ENCODE measurements at regions of chr3 and their contacts with region 1.

Region 1: GRCh38 chr3:112734718-112735350 is 93.9 kb upstream of the CCDC80 start:
- DNase-seq: peak; percentile 28 to 80 (median 64)
- ATAC-seq: peak; percentile 73
- H3K4me3 ChIP-seq: no peak overlapping the region
- H3K4me3 Mint-ChIP-seq: no peak overlapping the region
- H3K27ac ChIP-seq: no peak overlapping the region
- H3K27ac Mint-ChIP-seq: no peak overlapping the region
- H3K4me1 ChIP-seq: peaks cover 38% of the 10 kb centered on the region
- H3K4me1 Mint-ChIP-seq: peaks cover 39% of the 10 kb centered on the region
- H3K27me3 ChIP-seq: no peaks in the 10 kb centered on the region
- H3K27me3 Mint-ChIP-seq: no peaks in the 10 kb centered on the region
- CTCF ChIP-seq: peak; percentile 70

Region 2: DNA sequence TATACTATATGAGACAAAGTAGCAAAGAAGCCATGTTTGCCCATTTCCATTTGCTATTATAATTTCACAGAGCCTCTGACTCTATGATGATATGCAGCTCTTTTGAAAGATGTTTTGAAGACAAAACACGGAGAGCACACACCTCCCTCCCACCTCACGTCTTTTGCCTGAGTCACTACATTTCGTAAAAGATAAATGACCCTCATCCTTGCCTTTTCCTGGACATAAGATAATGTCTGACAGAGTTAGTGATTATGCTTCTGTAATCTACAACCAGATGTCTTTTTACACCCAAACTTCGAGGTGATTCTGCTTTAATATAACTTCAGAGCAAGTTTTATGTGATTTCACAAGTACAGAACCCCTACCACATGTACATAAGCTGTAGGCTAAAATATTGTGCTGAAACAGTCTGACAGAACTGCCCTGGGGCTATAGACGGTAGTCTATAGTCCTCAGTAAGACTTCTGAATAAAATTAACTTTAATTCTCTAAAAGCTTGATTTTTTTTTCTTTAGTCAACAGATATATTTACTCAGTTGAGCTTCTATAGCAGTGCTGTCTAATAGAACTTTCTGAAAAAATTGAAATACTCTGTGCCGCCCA is 11.9 kb after region 1 on chr3:
- CTCF ChIA-PET with region 1: interaction called, 26 read pairs
- POLR2A ChIA-PET with region 1: interaction called, 3 read pairs
- intact Hi-C with region 1: no loop called
- DNase-seq: no peak
- ATAC-seq: no peak
- H3K4me3 ChIP-seq: no peak overlapping the region
- H3K4me3 Mint-ChIP-seq: no peak overlapping the region
- H3K27ac ChIP-seq: no peak overlapping the region
- H3K27ac Mint-ChIP-seq: no peak overlapping the region
- H3K4me1 ChIP-seq: no peaks in the 10 kb centered on the region
- H3K4me1 Mint-ChIP-seq: peaks cover under 1% of the 10 kb centered on the region
- H3K27me3 ChIP-seq: no peaks in the 10 kb centered on the region
- H3K27me3 Mint-ChIP-seq: no peaks in the 10 kb centered on the region
- CTCF ChIP-seq: no peak

Region 3: DNA sequence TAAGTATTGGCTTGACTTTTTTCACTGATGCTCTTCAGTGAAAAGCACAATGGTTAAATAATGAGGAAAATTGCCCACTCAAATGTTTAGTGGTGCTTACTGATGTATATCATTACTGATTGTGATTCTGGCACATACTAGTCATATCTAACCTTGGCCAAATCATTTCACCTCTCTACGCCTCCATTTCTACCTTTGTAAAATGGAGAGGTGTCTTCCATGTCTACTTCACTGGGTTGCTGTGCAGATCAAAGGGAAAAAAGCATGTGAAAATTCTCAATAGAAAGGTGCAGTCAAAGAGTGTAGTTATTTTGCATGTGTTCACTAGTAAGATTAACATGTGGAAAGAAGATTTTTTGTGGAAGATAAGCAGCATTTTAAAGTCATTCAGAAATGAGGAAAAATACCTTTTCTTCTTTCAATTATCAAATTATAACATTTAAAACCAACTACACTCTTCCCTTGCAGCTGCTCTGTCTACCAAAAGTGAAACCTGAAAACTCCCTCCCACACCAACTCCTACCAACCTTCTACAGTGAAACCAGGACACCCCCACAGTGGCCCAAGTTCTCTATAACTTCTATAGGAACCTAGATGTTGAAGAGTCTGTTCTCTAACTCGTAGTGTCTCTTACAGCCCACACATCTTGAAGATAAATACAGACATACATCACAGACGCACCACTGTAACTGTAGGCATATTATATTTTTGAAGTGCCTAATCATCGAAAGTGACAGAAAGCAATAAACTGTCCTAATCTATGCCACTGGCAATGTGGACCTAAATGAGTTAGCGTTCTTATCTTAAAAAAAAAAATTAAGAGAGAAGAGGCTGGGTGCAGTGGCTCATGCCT is 238.7 kb after region 1 on chr3:
- CTCF ChIA-PET with region 1: interaction called, 141 read pairs
- POLR2A ChIA-PET with region 1: interaction called, 3 read pairs
- intact Hi-C with region 1: no loop called
- DNase-seq: peak in 5 of 9 experiments; percentile 18 to 74 (median 35)
- ATAC-seq: peak; percentile 86
- H3K4me3 ChIP-seq: peak overlapping the region; percentile 45 to 61
- H3K4me3 Mint-ChIP-seq: peak overlapping the region; percentile 93
- H3K27ac ChIP-seq: peak overlapping the region; percentile 34 to 81
- H3K27ac Mint-ChIP-seq: peak overlapping the region; percentile 97
- H3K4me1 ChIP-seq: peaks cover 66% of the 10 kb centered on the region
- H3K4me1 Mint-ChIP-seq: peaks cover 82% of the 10 kb centered on the region
- H3K27me3 ChIP-seq: no peaks in the 10 kb centered on the region
- H3K27me3 Mint-ChIP-seq: no peaks in the 10 kb centered on the region
- CTCF ChIP-seq: no peak

Region 4: DNA sequence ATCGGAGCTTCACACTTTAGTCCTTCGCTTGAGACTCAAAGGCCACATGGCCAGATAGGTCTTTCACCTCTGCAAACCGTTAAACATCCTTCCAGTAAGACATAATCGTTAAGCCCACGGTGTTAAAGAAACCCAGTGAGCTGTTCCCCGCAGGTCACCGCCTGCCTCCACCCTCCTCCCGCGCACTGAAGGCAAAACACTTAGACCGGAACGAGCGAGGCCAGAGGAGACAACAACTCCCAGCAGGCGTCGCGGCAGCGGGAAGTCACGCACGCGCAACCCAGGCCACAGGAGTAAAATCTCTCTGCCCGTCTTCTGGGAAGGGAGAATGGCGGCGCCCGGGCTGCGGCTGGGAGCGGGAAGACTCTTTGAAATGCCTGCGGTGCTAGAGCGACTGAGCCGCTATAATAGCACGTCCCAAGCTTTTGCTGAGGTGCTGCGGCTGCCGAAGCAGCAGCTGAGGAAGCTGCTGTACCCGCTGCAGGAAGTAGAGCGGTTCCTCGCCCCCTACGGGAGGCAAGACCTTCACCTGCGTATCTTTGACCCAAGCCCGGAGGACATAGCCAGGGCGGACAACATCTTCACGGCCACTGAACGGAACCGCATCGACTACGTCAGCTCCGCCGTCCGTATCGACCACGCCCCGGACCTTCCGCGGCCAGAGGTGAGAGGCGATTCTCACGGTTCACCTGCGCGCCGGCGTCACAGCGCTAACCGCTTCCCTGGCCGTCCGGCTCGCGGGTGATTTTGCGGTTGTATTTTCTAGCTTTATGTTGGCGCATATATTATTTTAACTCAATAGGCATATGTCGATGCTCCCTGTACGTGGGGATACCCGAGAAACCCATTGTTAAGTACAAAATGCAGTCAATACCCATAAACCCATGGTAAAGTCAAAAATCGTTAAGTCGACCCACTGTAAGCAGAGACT is 256.1 kb after region 1 on chr3 and contains the start of gene GTPBP8:
- CTCF ChIA-PET with region 1: interaction called, 14 read pairs
- POLR2A ChIA-PET with region 1: no interaction called
- intact Hi-C with region 1: no loop called
- DNase-seq: peak; percentile 61 to 93 (median 83)
- ATAC-seq: peak; percentile 84
- H3K4me3 ChIP-seq: peak within 1 kb of the TSS; percentile 97 to 98
- H3K4me3 Mint-ChIP-seq: peak within 1 kb of the TSS; percentile 93
- H3K27ac ChIP-seq: peak within 1 kb of the TSS; percentile 88 to 99
- H3K27ac Mint-ChIP-seq: peak within 1 kb of the TSS; percentile 97
- H3K4me1 ChIP-seq: peaks cover 22% of the 10 kb centered on the region
- H3K4me1 Mint-ChIP-seq: peaks cover 57% of the 10 kb centered on the region
- H3K27me3 ChIP-seq: no peaks in the 10 kb centered on the region
- H3K27me3 Mint-ChIP-seq: no peaks in the 10 kb centered on the region
- CTCF ChIP-seq: peak; percentile 24
- total RNA-seq, gene GTPBP8: 20.1 to 22.3 TPM

Region 5: GRCh38 chr3:113051302-113051711 is 316.5 kb after region 1 on chr3:
- CTCF ChIA-PET with region 1: interaction called, 3 read pairs
- POLR2A ChIA-PET with region 1: no interaction called
- intact Hi-C with region 1: loop called in 1 of 2 experiments (anchors 5 kb)
- DNase-seq: peak; percentile 75 to 91 (median 84)
- ATAC-seq: peak; percentile 100
- H3K4me3 ChIP-seq: no peak overlapping the region
- H3K4me3 Mint-ChIP-seq: no peak overlapping the region
- H3K27ac ChIP-seq: no peak overlapping the region
- H3K27ac Mint-ChIP-seq: no peak overlapping the region
- H3K4me1 ChIP-seq: no peaks in the 10 kb centered on the region
- H3K4me1 Mint-ChIP-seq: no peaks in the 10 kb centered on the region
- H3K27me3 ChIP-seq: no peaks in the 10 kb centered on the region
- H3K27me3 Mint-ChIP-seq: no peaks in the 10 kb centered on the region
- CTCF ChIP-seq: peak; percentile 84

Measured in CD8-positive, alpha-beta T cell (primary cell).